Endothelial cell of umbilical vein (primary cell): ENCODE measurements at regions of chr2 and their contacts with region 1.

Region 1: DNA sequence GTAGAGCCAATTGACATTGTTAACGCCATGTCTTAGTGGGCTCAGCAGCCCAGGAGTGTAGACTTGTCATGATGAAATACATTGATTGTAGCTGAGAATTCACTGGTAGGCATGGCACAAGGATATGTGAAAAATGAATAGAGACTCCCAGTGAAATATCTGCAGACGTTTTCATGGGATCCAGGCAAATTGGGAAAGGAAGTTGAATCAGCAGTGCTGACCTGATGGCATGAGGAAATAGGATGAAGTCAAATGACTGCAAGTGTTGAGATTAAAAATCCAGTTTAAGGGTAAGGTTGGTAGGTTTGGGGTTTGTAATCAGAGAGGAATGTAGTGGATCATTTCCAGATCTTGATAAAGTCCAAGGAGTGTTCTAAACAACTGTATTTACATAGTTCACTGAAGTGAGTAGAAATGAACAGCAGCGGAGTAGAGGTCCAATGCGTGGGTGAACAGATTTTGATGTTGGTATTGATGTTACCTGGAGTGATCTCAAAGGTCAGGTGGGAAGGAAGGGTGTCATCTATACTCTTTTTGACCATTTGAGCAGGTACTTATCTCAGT is 24.6 kb downstream of the INSIG2 start:
- DNase-seq: peak; percentile 93
- H3K4me3 ChIP-seq: no peak overlapping the region
- H3K27ac ChIP-seq: peak overlapping the region; percentile 91
- H3K4me1 ChIP-seq: peaks cover 20% of the 10 kb centered on the region
- H3K27me3 ChIP-seq: no peaks in the 10 kb centered on the region
- CTCF ChIP-seq: no peak
- POLR2A ChIP-seq: peak; percentile 79

Region 2: GRCh38 chr2:118186110-118186857 is 73.4 kb after region 1 on chr2:
- CTCF ChIA-PET with region 1: no interaction called
- POLR2A ChIA-PET with region 1: no interaction called
- dilution Hi-C with region 1: no loop called
- intact Hi-C with region 1: loop called (anchors 5 kb)
- DNase-seq: peak; percentile 80
- H3K4me3 ChIP-seq: peak overlapping the region; percentile 51 to 76 (median 60)
- H3K27ac ChIP-seq: peak overlapping the region; percentile 46
- H3K4me1 ChIP-seq: peaks cover 3% of the 10 kb centered on the region
- H3K27me3 ChIP-seq: peaks cover 2 to 13% of the 10 kb centered on the region in 2 experiments
- CTCF ChIP-seq: peak in 1 of 2 donors; percentile 11
- POLR2A ChIP-seq: peak; percentile 77